ENCODE measurements at regions of chr12 and their contacts with region 1.

Region 1: DNA sequence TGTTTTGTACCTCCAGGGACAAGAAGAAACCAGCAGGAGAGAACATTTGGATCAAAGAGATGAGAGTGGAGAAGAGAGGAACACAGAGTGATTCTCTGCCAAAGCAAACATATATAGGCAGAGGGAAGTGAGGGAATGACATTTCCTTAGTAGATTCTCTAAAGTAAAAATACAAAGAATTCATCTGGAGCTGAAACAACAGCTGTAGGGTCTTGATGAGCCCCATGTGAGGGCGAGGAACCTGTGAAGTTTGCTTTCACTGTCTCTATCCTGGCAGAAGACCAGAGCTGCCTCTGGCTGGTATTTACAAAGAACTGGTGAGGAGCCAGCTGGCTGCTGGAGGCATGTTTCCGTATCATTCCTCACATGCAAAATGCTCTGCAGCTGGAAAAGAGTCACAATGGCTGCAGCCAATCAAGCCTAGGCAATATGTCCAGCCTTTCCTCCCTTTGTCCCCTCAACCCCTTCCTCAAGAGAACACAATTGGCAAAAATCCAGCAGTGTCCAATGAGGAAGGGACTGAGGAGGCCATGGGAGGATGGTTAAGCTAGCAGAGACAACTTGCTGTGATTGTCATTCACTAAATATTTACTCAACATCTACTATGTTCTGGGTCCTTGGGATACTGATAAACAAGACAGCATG is 122.5 kb downstream of the PHLDA1 start:
- DNase-seq: peak; percentile 65 to 90 (median 81)
- ATAC-seq: peak; percentile 69 to 84 (median 78)
- H3K4me3 ChIP-seq: no peak overlapping the region
- H3K27ac ChIP-seq: peak overlapping the region in 11 of 12 donors; percentile 22 to 64 (median 54)
- H3K4me1 ChIP-seq: peaks cover 0 to 41% (median 23%) of the 10 kb centered on the region in 12 donors
- H3K27me3 ChIP-seq: no peaks in the 10 kb centered on the region
- CTCF ChIP-seq: no peak
- POLR2A ChIP-seq: no peak

Region 2: DNA sequence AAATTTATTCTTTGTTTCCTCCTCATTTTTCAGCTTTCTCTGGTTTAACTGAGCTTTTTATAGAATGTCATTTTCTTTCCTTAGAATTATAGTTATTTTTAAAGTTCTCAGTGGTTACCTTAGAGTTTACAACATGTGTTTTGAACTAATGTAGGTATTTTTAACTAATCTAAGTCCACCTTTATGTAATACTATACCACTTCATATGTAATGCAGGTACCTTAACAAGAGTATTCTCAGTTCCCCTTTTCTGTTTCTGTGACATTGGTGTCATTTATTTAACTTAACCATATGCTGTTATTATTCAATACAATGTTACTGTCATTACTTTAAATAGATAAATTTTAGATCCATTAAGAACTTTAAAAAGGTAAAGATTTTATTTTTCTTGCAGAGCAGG is 669.1 kb before region 1 on chr12:
- intact Hi-C with region 1: no loop called
- DNase-seq: no peak
- ATAC-seq: no peak
- H3K4me3 ChIP-seq: no peak overlapping the region
- H3K27ac ChIP-seq: no peak overlapping the region
- H3K4me1 ChIP-seq: no peaks in the 10 kb centered on the region
- H3K27me3 ChIP-seq: no peaks in the 10 kb centered on the region
- CTCF ChIP-seq: no peak
- POLR2A ChIP-seq: no peak

Region 3: GRCh38 chr12:75850721-75851462 is 58.2 kb before region 1 on chr12:
- intact Hi-C with region 1: loop called in 2 of 10 experiments (anchors 5 to 10 kb)
- DNase-seq: no peak
- ATAC-seq: no peak
- H3K4me3 ChIP-seq: no peak overlapping the region
- H3K27ac ChIP-seq: no peak overlapping the region
- H3K4me1 ChIP-seq: peaks cover 0 to 30% (median 16%) of the 10 kb centered on the region in 12 donors
- H3K27me3 ChIP-seq: no peaks in the 10 kb centered on the region
- CTCF ChIP-seq: no peak
- POLR2A ChIP-seq: no peak